MCF 10A (cell line): ENCODE measurements at regions of chr4 and their contacts with region 1.

Region 1: GRCh38 chr4:186067757-186068385 is 1.1 kb upstream of the TLR3 start:
- DNase-seq: peak; percentile 72
- H3K4me3 Mint-ChIP-seq: peak overlapping the region; percentile 82
- H3K27ac Mint-ChIP-seq: peak overlapping the region; percentile 77
- H3K4me1 Mint-ChIP-seq: peaks cover 12% of the 10 kb centered on the region
- H3K27me3 Mint-ChIP-seq: no peaks in the 10 kb centered on the region
- CTCF ChIP-seq: no peak

Region 2: DNA sequence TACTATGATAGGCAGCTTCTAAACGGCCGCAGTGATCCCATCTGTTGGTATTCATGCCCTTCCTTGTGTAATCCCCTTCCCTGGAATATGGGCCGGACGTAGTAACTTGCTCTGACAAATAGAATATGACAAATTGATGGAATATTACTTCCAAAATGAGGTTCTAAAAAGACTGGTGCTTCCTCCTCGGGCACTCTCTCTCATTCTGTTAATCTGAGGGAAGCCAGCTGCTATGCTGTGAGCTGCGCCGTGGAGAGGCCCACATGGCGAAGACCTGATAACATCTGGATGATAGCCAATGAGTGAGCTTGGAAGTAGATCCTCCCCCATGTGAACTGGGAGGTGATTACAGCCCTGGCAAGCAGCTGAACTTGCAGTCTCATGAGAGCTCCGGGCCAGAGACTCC is 952.0 kb before region 1 on chr4:
- CTCF ChIA-PET with region 1: no interaction called
- POLR2A ChIA-PET with region 1: no interaction called
- intact Hi-C with region 1: no loop called
- DNase-seq: no peak
- H3K4me3 Mint-ChIP-seq: no peak overlapping the region
- H3K27ac Mint-ChIP-seq: no peak overlapping the region
- H3K4me1 Mint-ChIP-seq: peaks cover 5% of the 10 kb centered on the region
- H3K27me3 Mint-ChIP-seq: no peaks in the 10 kb centered on the region
- CTCF ChIP-seq: no peak

Region 3: GRCh38 chr4:186078980-186079695 is 11.3 kb after region 1 on chr4:
- CTCF ChIA-PET with region 1: interaction called, 3 read pairs
- POLR2A ChIA-PET with region 1: interaction called, 13 read pairs
- intact Hi-C with region 1: no loop called
- DNase-seq: no peak
- H3K4me3 Mint-ChIP-seq: no peak overlapping the region
- H3K27ac Mint-ChIP-seq: no peak overlapping the region
- H3K4me1 Mint-ChIP-seq: no peaks in the 10 kb centered on the region
- H3K27me3 Mint-ChIP-seq: no peaks in the 10 kb centered on the region
- CTCF ChIP-seq: no peak

Region 4: DNA sequence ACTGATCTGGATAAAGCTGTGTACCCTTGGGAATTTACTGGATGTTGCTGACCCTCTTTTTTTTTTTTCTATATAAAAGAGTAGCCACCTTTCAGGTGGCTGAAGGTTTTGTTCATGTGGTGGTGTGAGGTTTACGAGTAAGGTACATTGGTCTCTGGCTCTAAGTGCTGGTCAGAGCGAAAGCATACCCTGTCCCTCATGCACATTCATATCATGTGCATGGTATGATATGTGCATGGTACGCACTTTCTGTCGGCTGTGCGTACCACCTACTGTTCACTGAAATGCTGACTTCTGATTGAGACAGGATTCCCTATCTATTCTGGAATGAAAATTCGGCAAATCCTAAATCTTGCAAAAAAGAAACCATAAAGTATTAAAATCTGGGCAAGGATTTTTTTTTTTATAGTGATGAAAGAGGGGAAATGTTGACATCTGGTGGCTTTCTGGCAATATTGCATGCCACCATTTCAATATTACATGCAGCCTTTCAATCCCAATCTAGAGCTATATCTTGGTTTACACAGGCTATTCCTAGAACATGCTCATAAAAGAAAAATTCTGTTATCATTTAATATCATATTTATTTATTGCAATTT is 69.4 kb after region 1 on chr4:
- CTCF ChIA-PET with region 1: interaction called, 13 read pairs
- POLR2A ChIA-PET with region 1: interaction called, 6 read pairs
- intact Hi-C with region 1: loop called (anchors 1 kb)
- DNase-seq: peak; percentile 34
- H3K4me3 Mint-ChIP-seq: no peak overlapping the region
- H3K27ac Mint-ChIP-seq: no peak overlapping the region
- H3K4me1 Mint-ChIP-seq: no peaks in the 10 kb centered on the region
- H3K27me3 Mint-ChIP-seq: no peaks in the 10 kb centered on the region
- CTCF ChIP-seq: peak; percentile 60

Region 5: GRCh38 chr4:186191200-186192065 is 123.6 kb after region 1 on chr4 and contains the start of gene CYP4V2:
- CTCF ChIA-PET with region 1: no interaction called
- POLR2A ChIA-PET with region 1: interaction called, 12 read pairs
- intact Hi-C with region 1: loop called (anchors 5 kb)
- DNase-seq: peak; percentile 71
- H3K4me3 Mint-ChIP-seq: peak within 1 kb of the TSS; percentile 87
- H3K27ac Mint-ChIP-seq: peak within 1 kb of the TSS; percentile 51
- H3K4me1 Mint-ChIP-seq: no peaks in the 10 kb centered on the region
- H3K27me3 Mint-ChIP-seq: no peaks in the 10 kb centered on the region
- CTCF ChIP-seq: peak; percentile 22
- total RNA-seq, gene CYP4V2: 22.1 and 30.2 TPM in 2 replicates